Activated CD4-positive, alpha-beta T cell treated with anti-CD3 and anti-CD28 coated beads for 36 hours (primary cell): ENCODE measurements at regions of chr9 and their contacts with region 1.

Region 1: DNA sequence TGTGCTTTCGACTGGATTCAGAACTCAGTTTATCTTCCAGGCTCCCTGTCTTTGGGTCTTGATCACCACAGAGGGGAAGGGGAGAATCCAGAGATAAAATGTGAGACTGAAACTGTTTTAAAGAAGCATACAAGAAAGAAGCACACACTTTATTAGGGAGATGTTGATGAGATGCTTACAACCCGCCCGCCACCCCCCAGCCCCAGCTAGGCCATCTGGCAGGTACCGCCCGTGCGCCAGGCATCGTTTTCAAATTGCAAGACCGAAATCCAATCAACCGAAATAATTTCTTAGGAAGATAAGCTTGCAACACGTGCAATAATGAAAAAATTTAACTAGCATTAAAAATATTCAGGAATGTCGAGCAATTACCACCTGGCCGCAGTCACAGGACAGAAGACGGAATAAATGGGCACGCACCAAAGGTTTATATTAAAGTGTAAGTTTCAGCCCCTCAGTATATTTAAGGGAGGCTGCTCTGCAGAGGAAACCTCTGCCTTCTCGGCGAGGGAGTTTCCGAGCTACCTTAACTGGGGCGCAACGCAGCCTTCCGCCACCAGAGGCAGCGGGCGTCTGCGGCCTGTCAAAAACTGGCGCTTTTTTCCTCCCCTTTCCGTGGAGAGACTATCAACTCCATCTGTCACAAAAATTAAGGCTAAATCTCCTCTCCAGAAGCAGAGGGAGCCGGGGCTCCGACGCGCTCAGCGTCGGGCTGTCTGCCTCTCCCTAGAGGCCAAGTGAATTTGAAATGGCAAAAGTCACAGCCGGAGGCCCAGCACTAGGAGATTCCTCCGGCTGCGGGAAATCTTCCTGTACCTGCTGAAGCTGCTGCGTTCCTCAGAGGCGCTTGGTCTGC is 996 bp upstream of the GAS1 start:
- DNase-seq: peak; percentile 85
- ATAC-seq: peak; percentile 55
- H3K4me3 Mint-ChIP-seq: peak overlapping the region; percentile 74
- H3K27ac Mint-ChIP-seq: no peak overlapping the region
- H3K4me1 Mint-ChIP-seq: peaks cover 9% of the 10 kb centered on the region
- H3K27me3 Mint-ChIP-seq: peaks cover 16% of the 10 kb centered on the region

Region 2: DNA sequence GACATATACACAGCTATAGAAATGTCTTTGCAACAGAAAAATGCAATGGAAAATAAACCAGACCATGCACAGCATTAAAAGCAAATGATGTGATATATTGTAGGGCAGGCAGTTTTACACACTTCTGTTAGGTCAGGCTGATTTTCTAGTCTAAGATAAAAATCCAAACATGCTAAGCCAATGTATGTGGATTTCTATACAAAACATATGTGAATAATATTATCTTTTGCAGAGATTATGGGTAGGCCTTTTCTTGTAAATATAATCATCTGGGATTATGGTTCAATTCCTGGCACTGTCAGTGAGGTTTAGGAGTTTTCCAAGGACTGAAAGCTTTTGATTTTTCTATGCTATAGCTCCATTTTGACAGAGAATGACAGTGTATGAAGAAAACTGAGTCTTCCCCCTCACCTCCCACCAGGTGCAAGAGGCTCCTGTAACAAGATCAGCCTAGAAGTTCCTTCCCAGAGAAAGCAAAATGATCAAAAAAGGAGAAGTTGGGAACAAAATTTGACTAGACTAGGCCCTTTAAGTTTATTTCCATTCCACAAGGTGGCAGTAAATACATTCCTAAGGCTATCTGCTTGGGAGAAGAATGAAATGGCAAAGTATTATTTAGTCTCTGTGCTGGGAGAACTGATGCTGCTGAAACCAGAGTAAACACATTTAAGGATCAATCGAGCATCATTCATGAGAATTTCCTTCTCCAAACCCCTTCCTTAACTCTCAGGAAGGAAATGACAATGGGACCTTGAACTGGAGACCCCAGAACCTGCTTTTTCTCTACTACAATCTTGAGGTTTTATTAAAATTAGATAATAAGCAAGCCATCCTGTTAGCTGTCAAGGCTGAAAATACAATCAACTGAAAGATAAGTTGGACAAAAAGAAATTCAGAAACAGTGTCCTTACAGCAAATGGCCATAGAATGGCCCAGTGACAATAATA is 461.1 kb before region 1 on chr9:
- CTCF ChIA-PET with region 1: no interaction called
- POLR2A ChIA-PET with region 1: no interaction called
- intact Hi-C with region 1: loop called in 1 of 2 experiments (anchors 5 kb)
- DNase-seq: no peak
- ATAC-seq: no peak
- H3K4me3 Mint-ChIP-seq: no peak overlapping the region
- H3K27ac Mint-ChIP-seq: no peak overlapping the region
- H3K4me1 Mint-ChIP-seq: peaks cover 7% of the 10 kb centered on the region
- H3K27me3 Mint-ChIP-seq: no peaks in the 10 kb centered on the region

Region 3: GRCh38 chr9:86783884-86784283 is 164.4 kb before region 1 on chr9:
- CTCF ChIA-PET with region 1: no interaction called
- POLR2A ChIA-PET with region 1: no interaction called
- intact Hi-C with region 1: no loop called
- DNase-seq: no peak
- ATAC-seq: no peak
- H3K4me3 Mint-ChIP-seq: no peak overlapping the region
- H3K27ac Mint-ChIP-seq: no peak overlapping the region
- H3K4me1 Mint-ChIP-seq: no peaks in the 10 kb centered on the region
- H3K27me3 Mint-ChIP-seq: peaks cover 12% of the 10 kb centered on the region

Region 4: DNA sequence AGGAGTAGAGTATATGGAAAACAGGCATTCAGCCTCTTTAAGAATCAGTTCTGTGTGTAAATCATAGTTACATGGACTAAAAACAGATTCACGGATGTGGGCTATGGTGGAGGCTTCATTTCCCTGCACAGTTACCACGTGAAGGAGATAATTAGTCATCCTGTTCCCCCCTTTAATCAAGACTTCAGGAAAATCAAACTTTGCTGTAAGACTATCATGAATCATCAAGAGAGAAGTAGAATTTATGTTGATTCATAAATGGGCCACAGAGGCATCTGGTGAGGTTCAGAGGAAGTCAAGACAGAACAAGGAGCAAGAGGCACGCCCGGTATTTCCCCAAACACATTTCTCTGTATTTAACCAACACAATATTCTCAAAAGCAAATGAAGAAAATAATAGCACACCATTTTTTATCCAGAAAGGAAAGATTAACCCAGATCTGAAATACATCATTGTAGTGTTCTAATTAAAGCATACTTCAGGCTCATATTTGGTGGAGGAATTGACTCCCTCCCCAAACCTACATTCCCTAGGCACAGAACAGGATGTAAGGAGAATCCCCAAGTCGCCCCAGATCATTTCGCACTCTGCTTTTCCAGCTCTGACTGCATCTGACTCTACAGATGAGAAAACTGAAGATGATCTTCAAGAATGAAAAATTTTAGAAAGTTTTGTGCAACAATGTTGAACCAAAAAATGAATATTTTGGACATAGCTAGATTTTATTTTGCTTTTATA is 174.8 kb after region 1 on chr9:
- CTCF ChIA-PET with region 1: no interaction called
- POLR2A ChIA-PET with region 1: no interaction called
- intact Hi-C with region 1: loop called in 1 of 2 experiments (anchors 5 kb)
- DNase-seq: peak; percentile 49
- ATAC-seq: peak; percentile 97
- H3K4me3 Mint-ChIP-seq: peak overlapping the region; percentile 12
- H3K27ac Mint-ChIP-seq: peak overlapping the region; percentile 60
- H3K4me1 Mint-ChIP-seq: peaks cover 15% of the 10 kb centered on the region
- H3K27me3 Mint-ChIP-seq: peaks cover 31% of the 10 kb centered on the region

Region 5: GRCh38 chr9:87140605-87141109 is 192.4 kb after region 1 on chr9:
- CTCF ChIA-PET with region 1: no interaction called
- POLR2A ChIA-PET with region 1: no interaction called
- intact Hi-C with region 1: no loop called
- DNase-seq: no peak
- ATAC-seq: no peak
- H3K4me3 Mint-ChIP-seq: no peak overlapping the region
- H3K27ac Mint-ChIP-seq: no peak overlapping the region
- H3K4me1 Mint-ChIP-seq: no peaks in the 10 kb centered on the region
- H3K27me3 Mint-ChIP-seq: peaks cover 20% of the 10 kb centered on the region

Region 6: GRCh38 chr9:87193925-87194868 is 245.9 kb after region 1 on chr9:
- CTCF ChIA-PET with region 1: no interaction called
- POLR2A ChIA-PET with region 1: no interaction called
- intact Hi-C with region 1: no loop called
- DNase-seq: no peak
- ATAC-seq: no peak
- H3K4me3 Mint-ChIP-seq: no peak overlapping the region
- H3K27ac Mint-ChIP-seq: no peak overlapping the region
- H3K4me1 Mint-ChIP-seq: no peaks in the 10 kb centered on the region
- H3K27me3 Mint-ChIP-seq: peaks cover 33% of the 10 kb centered on the region

Region 7: DNA sequence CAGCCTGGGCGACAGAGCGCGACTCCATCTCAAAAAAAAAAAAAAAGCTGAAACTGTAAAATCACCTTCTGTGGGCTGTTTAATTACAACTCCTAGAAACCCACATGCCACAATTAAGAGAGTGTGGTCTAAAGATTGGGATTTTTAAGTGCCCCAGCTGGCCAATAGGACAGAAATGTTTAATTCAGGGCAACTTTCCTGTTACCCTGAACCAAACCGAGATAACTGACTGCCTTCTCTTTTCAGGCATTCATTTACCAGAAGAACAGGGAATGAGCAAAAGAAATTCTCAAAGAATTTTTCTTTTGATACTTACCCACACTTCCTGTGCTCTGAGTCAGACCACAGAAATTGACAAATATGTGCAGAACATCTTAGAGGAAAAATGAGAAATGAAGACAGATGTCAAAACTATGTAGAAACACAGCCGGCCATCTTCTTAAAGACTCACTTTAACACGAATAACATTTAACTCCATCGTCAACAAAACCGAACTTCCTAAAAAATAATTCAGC is 328.1 kb after region 1 on chr9:
- CTCF ChIA-PET with region 1: no interaction called
- POLR2A ChIA-PET with region 1: no interaction called
- intact Hi-C with region 1: loop called in 1 of 2 experiments (anchors 5 kb)
- DNase-seq: no peak
- ATAC-seq: peak; percentile 72
- H3K4me3 Mint-ChIP-seq: no peak overlapping the region
- H3K27ac Mint-ChIP-seq: peak overlapping the region; percentile 64
- H3K4me1 Mint-ChIP-seq: peaks cover 33% of the 10 kb centered on the region
- H3K27me3 Mint-ChIP-seq: peaks cover 12% of the 10 kb centered on the region